ENCODE measurements at regions of chr15 and their contacts with region 1.

Region 1: DNA sequence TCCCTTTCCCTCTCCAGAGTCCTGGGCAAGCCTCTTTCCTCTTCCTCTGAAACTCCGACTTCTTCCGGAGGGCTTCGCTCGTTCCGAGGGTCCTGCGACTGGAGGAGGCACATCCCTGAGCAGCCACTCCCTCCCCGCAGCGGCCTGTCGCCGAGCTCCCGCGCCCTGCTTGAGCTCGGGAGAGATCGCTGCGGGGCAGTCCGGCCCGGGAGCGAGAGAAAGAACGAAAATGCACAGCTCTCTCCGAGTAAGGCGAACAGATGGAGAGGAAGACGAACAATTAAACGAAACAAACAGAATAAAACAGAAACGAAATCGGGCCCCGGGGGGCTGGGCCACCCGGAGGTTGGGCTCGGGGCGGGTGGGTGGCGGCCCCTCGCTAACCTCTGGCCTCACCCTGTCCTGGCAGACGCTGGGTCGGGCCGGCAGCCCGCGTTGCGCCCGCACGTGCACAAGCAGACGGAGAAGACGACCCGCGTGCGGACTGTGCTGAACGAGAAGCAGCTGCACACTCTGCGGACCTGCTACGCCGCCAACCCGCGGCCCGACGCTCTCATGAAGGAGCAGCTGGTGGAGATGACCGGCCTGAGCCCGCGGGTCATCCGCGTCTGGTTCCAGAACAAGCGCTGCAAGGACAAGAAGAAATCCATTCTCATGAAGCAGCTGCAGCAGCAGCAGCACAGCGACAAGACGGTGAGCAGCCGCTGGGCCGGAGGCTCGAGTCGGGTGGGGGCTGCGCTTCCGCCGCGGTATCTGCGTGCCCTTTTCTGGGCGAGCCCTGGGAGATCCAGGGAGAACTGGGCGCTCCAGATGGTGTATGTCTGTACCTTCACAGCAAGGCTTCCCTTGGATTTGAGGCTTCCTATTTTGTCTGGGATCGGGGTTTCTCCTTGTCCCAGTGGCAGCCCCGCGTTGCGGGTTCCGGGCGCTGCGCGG is 3.6 kb downstream of the ISL2 start:
- DNase-seq: peak in 5 of 35 experiments; percentile 21 to 50 (median 24)
- ATAC-seq: peak; percentile 24 to 34 (median 26)
- H3K4me3 ChIP-seq: peak overlapping the region; percentile 44 to 80
- H3K4me3 Mint-ChIP-seq: peak overlapping the region; percentile 80 to 94 (median 82)
- H3K27ac ChIP-seq: no peak overlapping the region
- H3K27ac Mint-ChIP-seq: no peak overlapping the region
- H3K4me1 ChIP-seq: peaks cover 38 to 83% of the 10 kb centered on the region in 2 experiments
- H3K4me1 Mint-ChIP-seq: peaks cover 62 to 68% (median 62%) of the 10 kb centered on the region in 3 donors
- H3K27me3 ChIP-seq: peaks cover 32 to 86% of the 10 kb centered on the region in 2 experiments
- H3K27me3 Mint-ChIP-seq: peaks cover 67 to 85% of the 10 kb centered on the region in 2 donors

Region 2: GRCh38 chr15:76285239-76285825 is 54.8 kb before region 1 on chr15:
- CTCF ChIA-PET with region 1: no interaction called
- POLR2A ChIA-PET with region 1: interaction called in 1 of 2 experiments, 10 read pairs
- DNase-seq: peak in 3 of 35 experiments; percentile 3 to 40 (median 4)
- ATAC-seq: no peak
- H3K4me3 ChIP-seq: no peak overlapping the region
- H3K4me3 Mint-ChIP-seq: no peak overlapping the region
- H3K27ac ChIP-seq: peak overlapping the region; percentile 71
- H3K27ac Mint-ChIP-seq: no peak overlapping the region
- H3K4me1 ChIP-seq: peaks cover 2 to 16% of the 10 kb centered on the region in 2 experiments
- H3K4me1 Mint-ChIP-seq: peaks cover 17 to 36% (median 34%) of the 10 kb centered on the region in 3 donors
- H3K27me3 ChIP-seq: no peaks in the 10 kb centered on the region
- H3K27me3 Mint-ChIP-seq: no peaks in the 10 kb centered on the region

Region 3: GRCh38 chr15:76368122-76368589 is 28.0 kb after region 1 on chr15:
- CTCF ChIA-PET with region 1: no interaction called
- POLR2A ChIA-PET with region 1: no interaction called
- DNase-seq: no peak
- ATAC-seq: no peak
- H3K4me3 ChIP-seq: no peak overlapping the region
- H3K4me3 Mint-ChIP-seq: no peak overlapping the region
- H3K27ac ChIP-seq: no peak overlapping the region
- H3K27ac Mint-ChIP-seq: no peak overlapping the region
- H3K4me1 ChIP-seq: no peaks in the 10 kb centered on the region
- H3K4me1 Mint-ChIP-seq: no peaks in the 10 kb centered on the region
- H3K27me3 ChIP-seq: no peaks in the 10 kb centered on the region
- H3K27me3 Mint-ChIP-seq: no peaks in the 10 kb centered on the region

Measured in T-cell (primary cell).